ENCODE measurements at regions of chr1 and their contacts with region 1.

Region 1: DNA sequence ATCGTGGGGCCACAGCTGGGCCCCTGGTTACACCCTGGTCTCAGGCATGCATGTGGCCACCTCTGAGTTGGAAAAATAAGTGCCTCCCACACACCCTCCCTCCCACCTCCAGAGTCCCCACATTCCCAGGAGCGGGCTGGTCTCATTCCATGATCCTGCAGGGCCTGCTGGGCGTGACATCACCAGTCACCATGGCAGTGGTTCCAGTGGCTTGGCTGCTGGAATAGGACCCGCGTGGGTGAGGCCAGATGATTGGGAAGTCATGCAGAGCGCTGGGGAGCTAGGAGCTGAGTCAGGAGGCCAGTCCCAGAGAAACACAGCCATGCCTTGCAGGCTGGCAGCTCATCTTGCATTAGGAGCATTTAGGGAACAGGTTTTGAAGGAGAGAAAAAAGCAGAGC is 125.4 kb upstream of the TMEM51 start:
- DNase-seq: no peak
- ATAC-seq: no peak
- H3K4me3 ChIP-seq: no peak overlapping the region
- H3K4me3 Mint-ChIP-seq: no peak overlapping the region
- H3K27ac ChIP-seq: no peak overlapping the region
- H3K27ac Mint-ChIP-seq: no peak overlapping the region
- H3K4me1 ChIP-seq: no peaks in the 10 kb centered on the region
- H3K4me1 Mint-ChIP-seq: no peaks in the 10 kb centered on the region
- H3K27me3 ChIP-seq: no peaks in the 10 kb centered on the region
- H3K27me3 Mint-ChIP-seq: peaks cover 2% of the 10 kb centered on the region
- CTCF ChIP-seq: no peak

Region 2: DNA sequence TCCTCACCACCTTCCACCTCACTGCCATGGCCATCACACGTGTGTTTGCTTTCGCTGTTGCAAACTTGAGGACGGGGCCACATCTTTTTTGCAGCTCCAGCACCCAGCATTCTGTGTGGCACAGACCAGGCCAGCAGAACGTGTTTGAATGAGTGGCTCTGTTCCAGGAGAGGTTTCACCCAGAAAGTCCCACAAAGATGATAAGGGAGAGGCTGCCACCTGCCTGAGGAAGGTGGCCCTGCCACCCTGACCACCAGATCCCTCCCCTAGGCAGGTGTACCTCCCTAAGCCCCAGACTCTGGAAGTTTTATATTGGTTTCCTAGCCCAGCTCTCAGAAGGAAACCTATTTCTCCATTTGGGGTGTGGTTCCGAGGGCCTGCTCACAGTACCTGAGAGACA is 177.5 kb before region 1 on chr1:
- CTCF ChIA-PET with region 1: no interaction called
- POLR2A ChIA-PET with region 1: no interaction called
- intact Hi-C with region 1: loop called in 1 of 2 experiments (anchors 5 kb)
- DNase-seq: no peak
- ATAC-seq: no peak
- H3K4me3 ChIP-seq: no peak overlapping the region
- H3K4me3 Mint-ChIP-seq: no peak overlapping the region
- H3K27ac ChIP-seq: no peak overlapping the region
- H3K27ac Mint-ChIP-seq: no peak overlapping the region
- H3K4me1 ChIP-seq: no peaks in the 10 kb centered on the region
- H3K4me1 Mint-ChIP-seq: no peaks in the 10 kb centered on the region
- H3K27me3 ChIP-seq: no peaks in the 10 kb centered on the region
- H3K27me3 Mint-ChIP-seq: peaks cover 3% of the 10 kb centered on the region
- CTCF ChIP-seq: no peak